ENCODE measurements at regions of chr10 and their contacts with region 1.

Region 1: DNA sequence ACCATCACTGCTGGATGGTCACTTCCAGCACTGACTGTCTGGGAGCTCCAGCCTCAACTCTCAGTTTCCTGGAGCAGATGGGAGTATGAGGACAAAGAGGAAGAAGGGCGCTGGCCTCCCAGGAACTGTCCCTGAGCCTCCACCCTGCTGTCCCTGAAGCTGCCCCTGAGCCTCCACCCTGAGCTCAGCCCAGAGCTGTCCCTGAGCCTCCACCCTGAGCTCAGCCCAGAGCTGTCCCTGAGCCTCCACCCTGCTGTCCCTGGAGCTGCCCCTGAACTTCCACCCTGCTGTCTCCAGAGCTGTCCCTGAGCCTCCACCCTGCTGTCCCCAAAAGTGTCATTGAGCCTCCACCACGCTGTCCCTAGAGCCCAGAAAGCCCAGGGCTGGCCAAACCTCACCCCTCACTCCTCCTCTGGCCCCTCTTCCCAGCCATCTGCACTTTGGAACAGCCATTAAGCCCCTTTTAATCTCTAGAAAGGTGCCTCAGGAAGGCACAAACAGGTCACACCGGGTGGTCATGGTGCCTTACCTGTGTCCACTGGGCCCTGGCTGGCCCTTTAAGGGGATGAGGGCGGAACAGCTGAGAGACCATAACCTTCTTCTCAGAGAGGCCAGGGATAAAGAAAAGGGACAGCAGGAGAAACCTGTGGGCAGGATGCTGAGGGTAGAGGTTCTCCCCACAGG is 30.6 kb upstream of the TUBB8 start:
- DNase-seq: no peak
- ATAC-seq: no peak
- H3K4me3 Mint-ChIP-seq: no peak overlapping the region
- H3K27ac Mint-ChIP-seq: no peak overlapping the region
- H3K4me1 Mint-ChIP-seq: no peaks in the 10 kb centered on the region
- H3K27me3 Mint-ChIP-seq: peaks cover 19% of the 10 kb centered on the region

Region 2: DNA sequence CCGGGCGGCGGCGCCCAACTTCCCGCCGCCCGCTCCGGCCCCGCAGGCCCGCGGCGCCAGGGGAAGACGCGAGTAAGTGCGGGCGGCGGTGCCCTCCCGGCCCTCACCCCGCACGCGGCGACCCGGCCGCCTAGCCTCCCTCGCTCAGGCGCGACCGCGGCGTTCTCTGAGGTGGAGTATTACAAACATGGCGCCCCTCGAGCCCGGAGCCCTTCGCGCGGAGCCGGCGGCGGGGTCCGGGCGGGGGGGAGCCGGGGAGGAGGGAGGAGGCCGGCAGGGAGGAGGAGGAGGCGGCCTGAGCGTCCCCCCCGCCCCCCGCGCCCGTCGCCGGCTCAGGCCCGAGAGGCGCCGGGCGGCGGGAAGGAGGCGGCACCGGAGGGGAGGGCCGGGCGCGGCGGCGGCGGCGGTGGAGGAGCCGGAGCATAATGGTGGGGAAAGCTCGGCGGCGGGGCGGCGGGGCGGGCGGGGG is 55.5 kb after region 1 on chr10 and contains the start of gene ZMYND11:
- CTCF ChIA-PET with region 1: interaction called, 3 read pairs
- POLR2A ChIA-PET with region 1: no interaction called
- intact Hi-C with region 1: loop called in 1 of 2 experiments (anchors 2 kb)
- DNase-seq: peak; percentile 74
- ATAC-seq: peak; percentile 25
- H3K4me3 Mint-ChIP-seq: peak within 1 kb of the TSS; percentile 84
- H3K27ac Mint-ChIP-seq: peak within 1 kb of the TSS; percentile 90
- H3K4me1 Mint-ChIP-seq: peaks cover 43% of the 10 kb centered on the region
- H3K27me3 Mint-ChIP-seq: no peaks in the 10 kb centered on the region
- total RNA-seq, gene ZMYND11: 13.2 to 16.9 TPM